ENCODE measurements at regions of chr12 and their contacts with region 1.

Region 1: GRCh38 chr12:25213338-25213737 is 18.3 kb downstream of the ETFRF1 start:
- DNase-seq: no peak
- H3K27ac ChIP-seq: no peak overlapping the region
- CTCF ChIP-seq: no peak

Region 2: GRCh38 chr12:25236190-25236589 is 22.9 kb after region 1 on chr12:
- CTCF ChIA-PET with region 1: no interaction called
- POLR2A ChIA-PET with region 1: no interaction called
- DNase-seq: no peak
- H3K27ac ChIP-seq: no peak overlapping the region
- CTCF ChIP-seq: no peak

Region 3: GRCh38 chr12:25250744-25251730 is 37.7 kb after region 1 on chr12 and contains the start of gene KRAS:
- CTCF ChIA-PET with region 1: no interaction called
- POLR2A ChIA-PET with region 1: no interaction called
- DNase-seq: peak; percentile 80
- H3K27ac ChIP-seq: peak within 1 kb of the TSS; percentile 73
- CTCF ChIP-seq: no peak

Region 4: GRCh38 chr12:25286837-25287236 is 73.5 kb after region 1 on chr12:
- CTCF ChIA-PET with region 1: no interaction called
- POLR2A ChIA-PET with region 1: no interaction called
- DNase-seq: peak; percentile 15
- H3K27ac ChIP-seq: no peak overlapping the region
- CTCF ChIP-seq: no peak

Region 5: GRCh38 chr12:25386831-25387731 is 173.7 kb after region 1 on chr12:
- CTCF ChIA-PET with region 1: interaction called, 15 read pairs
- POLR2A ChIA-PET with region 1: no interaction called
- DNase-seq: peak; percentile 53
- H3K27ac ChIP-seq: peak overlapping the region; percentile 79
- CTCF ChIP-seq: peak; percentile 65